CD8-positive, alpha-beta T cell (primary cell): ENCODE measurements at regions of chr11 and their contacts with region 1.

Region 1: DNA sequence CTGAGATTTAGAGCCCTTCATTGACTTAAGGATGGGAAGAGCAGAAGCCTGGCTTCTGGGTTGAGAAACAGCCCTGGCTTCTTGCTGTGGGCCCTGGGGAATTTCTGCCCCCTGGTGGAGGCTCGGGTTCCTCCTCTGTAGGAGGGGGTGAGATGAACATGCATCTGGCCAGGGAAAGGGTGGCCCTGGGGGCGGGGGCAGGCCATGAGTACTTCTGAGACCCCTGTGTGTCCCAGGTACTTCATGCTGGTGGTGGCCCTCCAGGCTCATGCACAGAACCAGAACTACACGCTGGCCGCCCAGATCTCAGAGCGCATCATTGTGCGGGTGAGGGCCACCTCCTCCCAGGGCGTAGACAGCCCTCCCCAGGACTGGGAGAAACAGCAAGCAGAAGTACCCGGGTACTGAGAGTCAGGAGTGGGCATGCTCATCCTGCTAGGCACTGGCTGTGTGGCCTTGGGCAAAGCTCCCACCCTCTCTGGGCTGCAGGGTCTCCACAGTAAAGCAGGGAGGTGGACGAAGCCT is 15.8 kb downstream of the TMEM258 start:
- DNase-seq: peak in 7 of 9 experiments; percentile 34 to 68 (median 59)
- ATAC-seq: peak; percentile 48
- H3K4me3 ChIP-seq: peak overlapping the region in 1 of 2 experiments; percentile 52
- H3K4me3 Mint-ChIP-seq: peak overlapping the region; percentile 69
- H3K27ac ChIP-seq: no peak overlapping the region
- H3K27ac Mint-ChIP-seq: peak overlapping the region; percentile 35
- H3K4me1 ChIP-seq: peaks cover 20% of the 10 kb centered on the region
- H3K4me1 Mint-ChIP-seq: peaks cover 12% of the 10 kb centered on the region
- H3K27me3 ChIP-seq: no peaks in the 10 kb centered on the region
- H3K27me3 Mint-ChIP-seq: peaks cover 2% of the 10 kb centered on the region
- CTCF ChIP-seq: peak; percentile 63

Region 2: DNA sequence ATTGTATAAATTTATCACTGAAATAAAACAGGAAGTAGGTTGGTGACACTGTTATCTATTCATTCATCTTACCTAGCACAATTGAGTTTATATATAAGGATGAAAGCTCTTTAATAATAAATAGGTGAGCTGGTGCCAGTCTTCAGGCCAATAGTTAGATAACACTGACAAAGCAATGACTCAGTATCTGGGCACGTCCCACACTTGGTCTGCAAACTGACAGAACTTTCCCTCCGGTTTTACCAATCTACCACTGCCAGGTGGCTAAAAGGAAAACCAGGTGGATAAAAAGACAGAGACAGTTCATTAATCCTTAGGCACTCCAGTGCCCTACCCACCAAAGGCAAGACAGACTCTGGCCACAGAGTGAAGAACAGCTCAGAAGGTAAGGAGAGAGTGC is 461.4 kb before region 1 on chr11:
- CTCF ChIA-PET with region 1: no interaction called
- POLR2A ChIA-PET with region 1: no interaction called
- intact Hi-C with region 1: no loop called
- DNase-seq: no peak
- ATAC-seq: no peak
- H3K4me3 ChIP-seq: no peak overlapping the region
- H3K4me3 Mint-ChIP-seq: no peak overlapping the region
- H3K27ac ChIP-seq: no peak overlapping the region
- H3K27ac Mint-ChIP-seq: no peak overlapping the region
- H3K4me1 ChIP-seq: no peaks in the 10 kb centered on the region
- H3K4me1 Mint-ChIP-seq: no peaks in the 10 kb centered on the region
- H3K27me3 ChIP-seq: no peaks in the 10 kb centered on the region
- H3K27me3 Mint-ChIP-seq: no peaks in the 10 kb centered on the region
- CTCF ChIP-seq: no peak

Region 3: GRCh38 chr11:61747192-61747966 is 29.2 kb before region 1 on chr11:
- CTCF ChIA-PET with region 1: interaction called, 5 read pairs
- POLR2A ChIA-PET with region 1: no interaction called
- intact Hi-C with region 1: loop called (anchors 1 kb)
- DNase-seq: peak in 6 of 9 experiments; percentile 22 to 56 (median 45)
- ATAC-seq: peak; percentile 34
- H3K4me3 ChIP-seq: no peak overlapping the region
- H3K4me3 Mint-ChIP-seq: no peak overlapping the region
- H3K27ac ChIP-seq: no peak overlapping the region
- H3K27ac Mint-ChIP-seq: no peak overlapping the region
- H3K4me1 ChIP-seq: peaks cover 6% of the 10 kb centered on the region
- H3K4me1 Mint-ChIP-seq: peaks cover 5% of the 10 kb centered on the region
- H3K27me3 ChIP-seq: peaks cover 3% of the 10 kb centered on the region in 2 experiments
- H3K27me3 Mint-ChIP-seq: peaks cover 21% of the 10 kb centered on the region
- CTCF ChIP-seq: peak; percentile 62

Region 4: DNA sequence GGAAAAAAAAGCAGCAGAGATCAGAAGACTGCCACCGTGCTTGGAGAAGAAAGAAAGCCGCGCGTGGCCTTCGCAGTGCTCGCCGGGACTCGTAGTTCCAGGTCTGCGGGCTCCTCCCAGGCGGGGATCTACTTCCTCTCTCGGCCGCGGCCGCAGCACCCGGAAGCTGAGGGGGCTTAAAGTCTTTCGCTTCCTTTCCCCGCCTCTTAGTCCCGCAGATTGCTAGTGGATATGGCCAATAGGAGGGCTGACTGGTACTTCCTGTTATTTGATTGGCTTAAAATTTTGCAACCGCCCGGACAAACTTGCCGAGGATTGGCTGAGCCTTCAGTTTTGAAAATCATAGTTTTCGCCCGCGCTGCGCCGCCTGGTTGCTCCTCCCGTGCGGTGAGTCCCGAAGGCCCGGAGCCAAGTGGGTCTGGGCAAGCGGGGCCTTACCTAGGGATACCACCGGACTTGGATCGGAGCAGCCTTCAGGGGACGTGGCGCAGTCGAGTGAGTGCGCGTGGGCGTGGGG is 347.1 kb after region 1 on chr11 and contains the start of gene INCENP:
- CTCF ChIA-PET with region 1: no interaction called
- POLR2A ChIA-PET with region 1: no interaction called
- intact Hi-C with region 1: no loop called
- DNase-seq: peak; percentile 90 to 98 (median 94)
- ATAC-seq: peak; percentile 98
- H3K4me3 ChIP-seq: peak within 1 kb of the TSS; percentile 78 to 97
- H3K4me3 Mint-ChIP-seq: peak within 1 kb of the TSS; percentile 92
- H3K27ac ChIP-seq: peak within 1 kb of the TSS; percentile 50 to 51
- H3K27ac Mint-ChIP-seq: peak within 1 kb of the TSS; percentile 84
- H3K4me1 ChIP-seq: peaks cover 18% of the 10 kb centered on the region
- H3K4me1 Mint-ChIP-seq: peaks cover 30% of the 10 kb centered on the region
- H3K27me3 ChIP-seq: no peaks in the 10 kb centered on the region
- H3K27me3 Mint-ChIP-seq: no peaks in the 10 kb centered on the region
- CTCF ChIP-seq: no peak
- total RNA-seq, gene INCENP: 11.6 to 16.1 TPM